Mucosa of descending colon (tissue), 3 donors: ENCODE measurements at regions of chr22 and their contacts with region 1.

Region 1: DNA sequence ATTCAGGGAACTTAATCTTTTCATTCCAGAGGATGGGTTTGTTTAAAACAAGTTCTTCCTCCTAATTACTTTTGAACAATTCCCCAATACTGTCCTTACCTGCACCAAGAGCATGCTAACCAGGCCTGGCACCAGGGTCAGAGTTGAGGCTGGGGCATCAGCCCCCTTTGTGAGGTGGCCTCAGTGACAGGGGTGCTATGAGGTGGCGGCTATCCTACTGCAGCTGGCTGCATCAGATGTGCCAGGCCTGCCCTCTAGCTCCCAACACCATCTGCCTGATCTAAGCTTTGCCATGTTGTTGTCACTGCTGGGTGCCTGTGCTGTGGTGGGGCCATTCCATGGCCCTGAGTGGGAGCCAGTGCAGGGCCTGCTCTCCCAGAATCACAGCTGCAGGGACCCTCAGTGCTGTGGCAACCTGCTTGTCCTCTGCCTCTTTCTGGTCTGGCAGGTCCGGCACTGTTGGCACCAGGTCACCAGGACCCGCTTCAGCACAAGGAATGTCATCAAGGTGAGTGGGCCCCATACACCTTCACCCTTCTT is 1.7 kb upstream of the SNU13 start:
- DNase-seq: no peak
- ATAC-seq: no peak
- H3K4me3 ChIP-seq: no peak overlapping the region
- H3K4me1 ChIP-seq: peaks cover 8% of the 10 kb centered on the region
- CTCF ChIP-seq: no peak

Region 2: GRCh38 chr22:41642331-41643110 is 47.9 kb before region 1 on chr22:
- intact Hi-C with region 1: no loop called
- DNase-seq: no peak
- ATAC-seq: no peak
- H3K4me3 ChIP-seq: no peak overlapping the region
- H3K4me1 ChIP-seq: no peaks in the 10 kb centered on the region
- CTCF ChIP-seq: no peak

Region 3: DNA sequence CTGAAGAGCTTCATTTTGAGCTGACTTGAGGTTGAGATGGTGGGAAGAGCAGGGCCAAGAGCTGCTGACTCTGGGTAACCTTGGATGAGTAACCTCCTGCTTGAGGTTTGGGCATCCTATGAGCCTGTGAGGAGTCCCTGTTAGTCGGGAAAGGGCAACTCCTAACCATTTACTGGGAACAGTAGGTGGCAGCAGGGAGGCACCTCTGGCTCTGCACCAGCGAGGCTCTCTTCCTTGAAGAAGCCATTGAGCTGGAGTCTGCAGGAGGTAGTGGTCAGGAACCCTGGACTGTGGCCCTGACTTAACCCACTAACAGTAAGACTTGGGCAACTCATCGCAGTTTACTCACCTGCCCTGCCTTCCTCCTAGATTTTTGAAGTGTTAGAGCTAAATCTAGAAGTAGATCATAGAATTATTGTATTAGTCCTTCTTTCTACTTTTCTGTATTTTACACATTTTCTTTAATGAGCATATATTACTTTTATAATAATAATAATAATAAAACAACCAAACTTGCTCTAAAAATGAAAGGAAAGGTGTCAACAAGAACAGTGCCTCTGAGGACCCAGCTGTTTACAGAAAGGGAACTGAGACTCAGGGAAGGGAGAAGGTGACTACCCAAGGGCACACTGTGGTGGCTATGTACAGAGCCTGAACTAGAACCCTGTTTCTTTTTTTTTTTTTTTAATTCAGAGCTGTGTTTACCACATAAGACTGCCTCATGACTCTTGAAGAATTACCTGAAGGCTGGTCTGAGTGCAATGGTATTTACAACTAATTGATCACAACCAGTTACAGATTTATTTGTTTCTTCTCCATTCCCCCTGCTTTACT is 56.4 kb after region 1 on chr22:
- intact Hi-C with region 1: no loop called
- DNase-seq: peak; percentile 60 to 87 (median 68)
- ATAC-seq: peak; percentile 96
- H3K4me3 ChIP-seq: no peak overlapping the region
- H3K4me1 ChIP-seq: no peaks in the 10 kb centered on the region
- CTCF ChIP-seq: peak; percentile 51

Region 4: DNA sequence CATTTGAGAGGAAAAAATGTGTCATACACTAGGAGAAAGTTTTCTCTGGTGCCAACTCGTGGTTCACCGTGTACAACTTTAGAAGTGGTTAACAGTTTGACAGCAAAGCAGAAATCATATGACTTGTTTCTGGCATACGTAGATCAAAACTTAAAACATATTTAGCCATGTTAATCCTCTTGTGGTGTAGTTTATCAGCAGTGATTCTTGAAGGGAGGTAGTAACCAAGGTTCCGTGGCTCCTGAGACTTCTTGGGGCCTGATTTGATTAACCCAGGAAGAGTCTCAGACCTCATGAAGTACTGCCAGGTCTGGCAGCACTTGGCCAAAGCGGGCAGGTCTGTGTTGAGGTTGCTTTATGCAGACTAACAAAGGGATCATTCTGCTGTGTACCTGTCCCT is 183.0 kb after region 1 on chr22:
- intact Hi-C with region 1: no loop called
- DNase-seq: no peak
- ATAC-seq: peak; percentile 24
- H3K4me3 ChIP-seq: no peak overlapping the region
- H3K4me1 ChIP-seq: no peaks in the 10 kb centered on the region
- CTCF ChIP-seq: no peak

Region 5: DNA sequence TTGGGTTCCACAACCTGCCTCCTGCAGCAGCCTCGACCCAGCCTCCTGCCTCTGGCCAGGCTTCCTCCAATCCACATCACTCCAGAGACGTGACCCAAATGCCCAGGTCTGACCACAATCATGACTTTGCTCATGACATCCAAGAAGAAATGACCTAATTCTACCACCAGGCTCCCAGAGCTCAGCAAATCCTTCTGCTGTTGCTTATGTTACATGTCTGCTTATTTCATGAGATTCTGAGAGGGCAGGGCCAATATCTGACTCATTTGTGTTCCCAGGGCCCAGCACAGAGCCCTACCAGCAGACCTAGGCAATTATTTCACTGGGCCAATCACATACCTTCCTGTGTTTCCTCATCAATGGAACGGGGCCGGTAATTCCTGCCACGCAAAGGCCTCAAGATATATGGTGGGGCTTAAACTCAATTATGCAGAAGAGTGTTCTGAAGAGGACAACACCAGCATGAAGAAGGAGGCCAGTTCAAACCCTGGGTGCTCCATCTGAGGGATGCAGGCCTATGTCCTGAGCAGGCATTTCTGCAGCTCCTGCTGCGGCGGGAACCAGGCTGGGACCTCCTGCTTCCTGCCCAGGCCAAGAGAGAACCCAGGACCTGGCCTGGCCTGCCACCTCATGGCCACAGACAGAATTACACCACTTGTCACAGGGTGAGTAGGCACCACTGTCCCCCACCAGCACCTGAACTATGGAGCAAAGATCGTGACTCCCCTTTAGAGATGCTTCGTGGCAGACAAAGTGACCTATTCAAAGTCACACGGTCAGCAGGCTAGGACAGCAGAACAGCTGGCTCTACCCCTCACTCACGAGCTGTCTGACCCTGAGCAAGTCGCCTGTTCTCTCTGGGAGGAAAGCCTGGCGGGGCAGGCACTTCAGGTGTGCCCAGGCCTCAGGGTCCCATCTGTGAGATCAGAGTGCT is 250.7 kb after region 1 on chr22:
- intact Hi-C with region 1: loop called (anchors 5 to 10 kb)
- DNase-seq: peak; percentile 90 to 93 (median 93)
- ATAC-seq: peak; percentile 82
- H3K4me3 ChIP-seq: no peak overlapping the region
- H3K4me1 ChIP-seq: peaks cover 27% of the 10 kb centered on the region
- CTCF ChIP-seq: peak; percentile 67